ENCODE measurements at regions of chr6 and their contacts with region 1.

Region 1: GRCh38 chr6:79233611-79234149 is 802 bp downstream of the HMGN3 start:
- DNase-seq: peak; percentile 77 to 93 (median 87)

Region 2: DNA sequence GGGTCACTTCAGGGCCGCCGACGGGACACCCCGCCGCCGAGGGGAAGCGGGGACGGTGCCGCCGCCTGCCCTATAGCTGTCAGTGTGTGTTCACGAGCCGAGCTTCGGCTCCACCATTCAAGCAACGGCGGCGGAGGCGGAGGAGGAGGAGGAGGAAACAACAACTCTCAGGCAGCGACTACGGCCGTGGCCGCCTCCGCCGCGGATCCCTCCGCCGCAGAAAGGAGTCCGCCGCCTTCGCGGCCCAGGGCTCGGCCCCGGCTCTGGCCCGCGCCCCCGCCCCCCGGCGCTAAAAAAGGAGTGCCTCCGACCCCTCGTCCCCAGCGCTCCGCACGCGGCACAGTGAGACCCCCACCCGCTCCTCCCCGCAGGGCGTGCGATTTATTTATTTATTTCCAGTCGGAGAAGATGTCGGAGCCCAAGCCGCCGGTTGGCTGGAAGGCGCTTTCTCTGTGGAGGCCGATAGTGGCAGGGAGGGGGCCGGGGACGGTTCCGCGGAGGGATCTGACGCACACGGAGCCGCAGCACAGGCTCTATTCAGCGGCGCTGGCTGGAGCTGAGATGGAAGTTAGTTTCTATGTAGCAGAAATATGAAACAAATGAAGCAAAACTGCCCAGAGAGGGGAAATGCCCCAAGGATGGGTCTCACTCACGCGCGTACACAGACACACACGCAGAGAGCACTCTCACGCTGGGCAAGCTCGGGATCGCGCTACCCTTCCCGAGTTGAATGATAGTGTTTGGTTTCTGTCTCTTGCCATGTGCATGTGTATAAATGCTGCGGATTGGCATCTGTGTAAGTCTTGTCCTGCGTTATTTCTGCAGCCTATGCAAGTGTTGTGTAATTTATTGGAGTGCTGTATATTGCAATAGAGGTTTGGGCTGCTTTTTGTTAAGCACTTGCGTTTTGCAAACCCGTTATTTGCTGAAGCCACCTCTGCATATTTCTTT is 155.3 kb before region 1 on chr6 and contains the start of gene PHIP:
- intact Hi-C with region 1: loop called (anchors 5 kb)
- DNase-seq: peak; percentile 82 to 97 (median 93)

Region 3: DNA sequence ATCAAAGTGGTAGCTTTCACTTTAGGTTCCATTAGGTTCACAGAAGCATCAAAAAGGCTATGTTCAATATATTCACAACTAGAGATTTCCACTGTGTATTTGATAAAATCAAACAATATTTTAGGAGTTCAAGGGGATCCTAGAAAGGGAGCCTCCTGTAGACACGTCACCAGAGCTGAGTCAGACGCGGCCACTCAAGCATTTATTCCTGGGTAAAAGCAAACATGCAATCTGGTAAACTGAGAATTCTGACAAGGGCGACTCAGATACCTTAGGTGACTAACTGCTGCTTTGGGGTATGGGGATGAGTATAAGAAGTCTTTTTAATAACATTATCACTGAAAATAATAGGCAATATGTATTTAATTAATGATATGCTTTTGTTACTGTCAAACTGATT is 119.5 kb after region 1 on chr6:
- intact Hi-C with region 1: no loop called
- DNase-seq: no peak

Region 4: DNA sequence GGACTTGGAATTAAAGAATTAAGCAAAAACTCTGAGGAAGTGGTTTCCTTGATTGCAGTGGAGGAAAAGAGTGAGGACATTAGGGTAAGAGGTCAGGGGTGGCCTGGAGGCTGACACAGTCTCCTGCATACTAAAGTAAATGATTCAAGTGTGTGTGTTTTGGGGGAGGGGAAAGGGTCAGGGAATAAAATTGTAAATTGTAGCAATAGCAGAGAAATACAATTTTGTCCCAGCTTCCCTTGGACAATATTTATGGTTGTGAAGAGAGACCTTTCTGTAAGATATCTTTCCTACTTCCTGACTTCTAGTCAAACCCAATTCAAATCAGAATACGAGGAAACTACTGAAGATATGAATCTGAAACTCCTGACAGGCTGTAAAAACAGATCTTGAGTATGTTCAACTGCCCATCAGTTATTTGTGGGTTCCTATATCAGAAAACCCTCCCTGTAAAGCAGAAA is 144.2 kb after region 1 on chr6:
- intact Hi-C with region 1: no loop called
- DNase-seq: no peak

Region 5: GRCh38 chr6:79466207-79466834 is 232.6 kb after region 1 on chr6:
- intact Hi-C with region 1: loop called (anchors 10 kb)
- DNase-seq: no peak

Measured in head of caudate nucleus (tissue), 42 donors.